ENCODE measurements at regions of chr21 and their contacts with region 1.

Region 1: GRCh38 chr21:39349211-39350093 is 564 bp upstream of the HMGN1 start:
- DNase-seq: peak; percentile 96
- H3K4me3 ChIP-seq: peak overlapping the region; percentile 2 to 59 (median 56)
- H3K27ac ChIP-seq: peak overlapping the region; percentile 88
- H3K4me1 ChIP-seq: peaks cover 34% of the 10 kb centered on the region
- H3K27me3 ChIP-seq: peaks cover 0 to 3% of the 10 kb centered on the region in 2 experiments
- CTCF ChIP-seq: no peak
- POLR2A ChIP-seq: peak; percentile 79

Region 2: GRCh38 chr21:39183237-39184007 is 166.0 kb before region 1 on chr21 and contains the start of gene PSMG1:
- CTCF ChIA-PET with region 1: no interaction called
- POLR2A ChIA-PET with region 1: no interaction called
- dilution Hi-C with region 1: no loop called
- intact Hi-C with region 1: loop called (anchors 1 kb)
- DNase-seq: peak; percentile 96
- H3K4me3 ChIP-seq: peak within 1 kb of the TSS; percentile 75 to 98 (median 92)
- H3K27ac ChIP-seq: peak within 1 kb of the TSS; percentile 70
- H3K4me1 ChIP-seq: peaks cover 18% of the 10 kb centered on the region
- H3K27me3 ChIP-seq: no peaks in the 10 kb centered on the region
- CTCF ChIP-seq: no peak
- POLR2A ChIP-seq: peak; percentile 85
- total RNA-seq, gene PSMG1: 66.3 and 75.9 TPM in 2 replicates

Region 3: GRCh38 chr21:39313571-39314142 is 35.8 kb before region 1 on chr21 and contains the start of gene BRWD1:
- CTCF ChIA-PET with region 1: no interaction called
- POLR2A ChIA-PET with region 1: interaction called, 6 read pairs
- dilution Hi-C with region 1: no loop called
- intact Hi-C with region 1: loop called (anchors 1 kb)
- DNase-seq: peak; percentile 76
- H3K4me3 ChIP-seq: peak within 1 kb of the TSS; percentile 52 to 57 (median 54)
- H3K27ac ChIP-seq: peak within 1 kb of the TSS; percentile 88
- H3K4me1 ChIP-seq: peaks cover 12% of the 10 kb centered on the region
- H3K27me3 ChIP-seq: peaks cover 4% of the 10 kb centered on the region in 2 experiments
- CTCF ChIP-seq: peak in 1 of 2 donors; percentile 11
- POLR2A ChIP-seq: no peak
- total RNA-seq, gene BRWD1: 28.8 and 33.2 TPM in 2 replicates

Region 4: DNA sequence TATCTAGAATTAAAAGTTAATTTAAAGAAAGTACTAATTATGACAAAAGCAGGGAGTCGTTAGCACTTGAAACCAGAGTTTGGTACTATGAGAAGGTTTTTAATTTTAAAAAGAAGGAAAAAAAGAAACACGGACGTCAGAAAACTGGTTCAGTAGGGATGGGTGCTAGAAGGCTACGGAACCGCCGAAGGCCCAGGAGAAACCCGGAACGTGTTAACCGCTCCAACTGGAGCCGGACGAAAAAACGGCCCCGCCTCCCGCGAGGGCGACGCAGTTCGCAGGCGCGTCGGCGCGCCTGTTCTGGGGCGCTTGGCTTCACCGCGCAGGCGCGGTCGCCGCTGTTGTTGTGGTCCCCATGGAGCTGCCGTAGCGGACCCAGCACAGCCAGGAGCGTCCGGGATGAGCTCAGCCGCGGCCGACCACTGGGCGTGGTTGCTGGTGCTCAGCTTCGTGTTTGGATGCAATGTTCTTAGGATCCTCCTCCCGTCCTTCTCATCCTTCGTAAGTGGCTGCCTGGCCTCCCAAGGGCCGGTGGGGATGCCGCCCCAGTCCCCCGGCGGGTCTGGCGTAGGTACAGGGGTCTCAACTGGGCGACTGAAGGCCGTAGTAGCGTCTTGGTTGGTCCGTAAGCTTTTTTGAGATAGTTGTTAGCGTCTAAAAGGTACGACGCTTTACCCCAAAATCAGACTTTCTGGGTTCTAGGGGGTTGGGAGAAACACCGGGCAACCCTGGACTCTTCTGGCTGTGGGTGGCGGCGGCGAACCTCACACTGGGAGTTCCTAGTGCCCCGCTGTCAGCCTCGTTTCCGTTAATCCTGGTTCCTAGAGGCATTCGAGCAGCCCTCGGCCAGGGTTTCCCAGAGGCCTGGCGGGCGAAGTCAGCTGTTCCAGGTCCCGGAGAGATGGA is 30.8 kb after region 1 on chr21:
- CTCF ChIA-PET with region 1: interaction called, 6 read pairs
- POLR2A ChIA-PET with region 1: interaction called, 7 read pairs
- dilution Hi-C with region 1: no loop called
- intact Hi-C with region 1: loop called (anchors 2 kb)
- DNase-seq: peak; percentile 95
- H3K4me3 ChIP-seq: peak overlapping the region; percentile 48 to 80 (median 78)
- H3K27ac ChIP-seq: peak overlapping the region; percentile 71
- H3K4me1 ChIP-seq: peaks cover 14% of the 10 kb centered on the region
- H3K27me3 ChIP-seq: peaks cover 3 to 5% of the 10 kb centered on the region in 2 experiments
- CTCF ChIP-seq: no peak
- POLR2A ChIP-seq: peak; percentile 86

Region 5: GRCh38 chr21:39388038-39388810 is 38.8 kb after region 1 on chr21:
- CTCF ChIA-PET with region 1: interaction called, 26 read pairs
- POLR2A ChIA-PET with region 1: interaction called, 4 read pairs
- dilution Hi-C with region 1: no loop called
- intact Hi-C with region 1: loop called (anchors 1 kb)
- DNase-seq: peak; percentile 70
- H3K4me3 ChIP-seq: peak overlapping the region; percentile 26 to 41 (median 30)
- H3K27ac ChIP-seq: no peak overlapping the region
- H3K4me1 ChIP-seq: peaks cover 23% of the 10 kb centered on the region
- H3K27me3 ChIP-seq: no peaks in the 10 kb centered on the region
- CTCF ChIP-seq: peak; percentile 94 to 95
- POLR2A ChIP-seq: no peak

Measured in endothelial cell of umbilical vein (primary cell).